ENCODE measurements at regions of chr18 and their contacts with region 1.

Region 1: DNA sequence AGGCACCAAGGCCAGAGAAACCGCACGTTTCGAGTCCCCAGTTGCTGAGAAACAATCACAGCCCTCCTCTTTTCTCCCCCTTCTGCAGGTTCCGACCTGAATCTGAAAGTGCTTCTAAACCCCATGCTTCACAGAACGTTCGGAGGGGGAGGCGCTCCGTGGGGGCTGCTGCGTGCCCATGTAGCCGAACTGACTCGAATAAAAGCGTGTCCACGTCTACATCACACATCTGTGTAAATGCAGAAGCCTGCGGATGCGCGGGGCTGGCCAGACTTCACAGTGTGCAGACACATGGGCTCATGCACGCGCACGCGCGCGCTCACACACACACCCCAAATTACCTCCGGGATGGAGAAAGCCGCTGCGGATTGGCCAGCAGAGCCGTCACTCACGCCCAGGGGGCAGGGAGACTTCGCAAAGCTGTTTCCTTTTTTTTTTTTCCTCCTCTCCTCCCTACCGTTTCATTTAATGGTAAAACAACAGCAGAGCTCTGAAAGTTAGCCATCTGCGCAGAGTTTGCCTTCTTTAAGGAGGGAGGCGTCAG is 2.3 kb downstream of the ZNF516 start:
- DNase-seq: peak; percentile 100
- H3K4me3 ChIP-seq: peak overlapping the region; percentile 49 to 74 (median 66)
- H3K27ac ChIP-seq: peak overlapping the region; percentile 89 to 95 (median 94)
- H3K4me1 ChIP-seq: peaks cover 0 to 48% (median 31%) of the 10 kb centered on the region in 4 donors
- H3K27me3 ChIP-seq: no peaks in the 10 kb centered on the region
- CTCF ChIP-seq: no peak
- EP300 ChIP-seq: no peak
- POLR2A ChIP-seq: peak; percentile 25 to 38

Region 2: DNA sequence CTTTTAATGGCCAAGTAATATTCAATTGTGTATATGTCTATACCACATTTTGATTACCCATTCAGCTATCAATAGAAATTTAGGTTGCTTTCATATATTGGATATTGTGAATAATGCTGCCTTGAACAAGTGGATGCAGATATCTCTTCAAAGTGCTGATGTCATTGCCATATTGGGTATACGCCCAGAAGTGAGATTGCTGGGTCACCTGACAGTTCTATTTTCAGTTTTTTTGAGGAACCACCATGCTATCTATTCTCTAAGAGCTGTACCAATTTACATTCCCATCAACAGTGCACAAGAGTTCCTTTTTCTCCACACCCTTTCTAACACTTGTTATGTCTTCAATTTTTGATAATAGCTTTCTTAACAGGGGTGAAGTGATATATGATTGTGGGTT is 304.6 kb before region 1 on chr18:
- intact Hi-C with region 1: no loop called
- DNase-seq: no peak
- H3K4me3 ChIP-seq: no peak overlapping the region
- H3K27ac ChIP-seq: no peak overlapping the region
- H3K4me1 ChIP-seq: no peaks in the 10 kb centered on the region
- H3K27me3 ChIP-seq: no peaks in the 10 kb centered on the region
- CTCF ChIP-seq: no peak
- EP300 ChIP-seq: no peak
- POLR2A ChIP-seq: no peak

Region 3: GRCh38 chr18:76339246-76339620 is 153.5 kb before region 1 on chr18:
- intact Hi-C with region 1: no loop called
- DNase-seq: no peak
- H3K4me3 ChIP-seq: no peak overlapping the region
- H3K27ac ChIP-seq: no peak overlapping the region
- H3K4me1 ChIP-seq: no peaks in the 10 kb centered on the region
- H3K27me3 ChIP-seq: no peaks in the 10 kb centered on the region
- CTCF ChIP-seq: no peak
- EP300 ChIP-seq: no peak
- POLR2A ChIP-seq: no peak

Region 4: DNA sequence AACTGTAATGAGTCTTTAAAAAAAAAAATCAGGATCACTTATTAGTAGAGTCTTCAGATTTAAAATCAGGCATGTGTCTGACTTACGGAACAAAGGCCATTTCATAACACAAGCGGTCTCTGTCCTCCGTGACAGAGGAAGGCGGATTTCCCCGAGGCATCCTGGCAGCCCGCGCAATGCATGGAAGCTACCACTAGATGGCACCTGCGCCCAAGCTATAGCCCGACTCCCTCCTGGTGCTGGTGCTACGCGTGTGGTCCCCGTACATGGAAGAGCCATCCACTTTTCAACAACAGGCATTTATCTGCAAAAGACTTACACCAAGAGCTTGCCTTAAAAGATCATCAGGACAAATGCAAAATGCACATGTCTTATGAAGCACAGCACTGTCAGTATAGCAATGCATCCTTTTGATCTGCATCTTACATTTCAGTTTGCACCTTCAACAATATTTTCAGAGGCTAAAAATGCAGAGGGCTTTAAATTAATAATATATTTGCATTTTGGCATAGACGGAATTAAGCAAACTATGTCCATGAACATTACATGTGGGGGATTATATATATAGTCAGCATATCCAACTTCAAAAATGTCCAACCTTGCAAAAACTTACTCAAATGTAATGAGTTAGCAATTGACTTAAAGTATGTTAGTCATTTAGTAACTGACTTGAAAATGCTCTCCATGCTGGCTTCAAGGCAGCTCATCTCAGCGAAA is 93.7 kb before region 1 on chr18:
- intact Hi-C with region 1: loop called (anchors 5 kb)
- DNase-seq: peak; percentile 94
- H3K4me3 ChIP-seq: no peak overlapping the region
- H3K27ac ChIP-seq: no peak overlapping the region
- H3K4me1 ChIP-seq: peaks cover 0 to 22% (median 4%) of the 10 kb centered on the region in 4 donors
- H3K27me3 ChIP-seq: no peaks in the 10 kb centered on the region
- CTCF ChIP-seq: peak; percentile 83 to 97 (median 94)
- EP300 ChIP-seq: no peak
- POLR2A ChIP-seq: no peak

Region 5: DNA sequence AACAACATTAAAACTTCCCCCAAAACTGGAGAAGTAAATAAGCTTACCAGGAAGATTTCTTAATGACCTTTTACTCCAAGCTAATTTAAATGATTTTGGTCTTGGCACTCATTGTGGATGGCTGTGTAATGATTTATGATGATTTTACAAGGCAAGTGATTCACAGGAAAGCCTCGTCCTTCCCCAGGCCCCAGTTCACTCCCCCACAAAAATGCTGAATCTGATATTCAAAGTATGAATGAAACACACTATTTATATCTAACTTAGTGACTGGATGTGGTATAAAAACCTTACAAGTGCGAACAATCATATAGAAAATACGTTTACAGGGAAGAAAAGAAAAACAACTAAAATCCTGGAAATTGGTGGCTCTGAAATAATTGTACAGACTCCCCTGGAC is 47.5 kb before region 1 on chr18:
- intact Hi-C with region 1: loop called (anchors 2 kb)
- DNase-seq: no peak
- H3K4me3 ChIP-seq: no peak overlapping the region
- H3K27ac ChIP-seq: peak overlapping the region; percentile 45 to 89 (median 70)
- H3K4me1 ChIP-seq: peaks cover 0 to 75% (median 60%) of the 10 kb centered on the region in 4 donors
- H3K27me3 ChIP-seq: no peaks in the 10 kb centered on the region
- CTCF ChIP-seq: no peak
- EP300 ChIP-seq: no peak
- POLR2A ChIP-seq: no peak

Region 6: GRCh38 chr18:76451396-76452331 is 41.1 kb before region 1 on chr18:
- intact Hi-C with region 1: loop called (anchors 2 kb)
- DNase-seq: peak; percentile 63
- H3K4me3 ChIP-seq: peak overlapping the region; percentile 40 to 64 (median 59)
- H3K27ac ChIP-seq: peak overlapping the region; percentile 79 to 89 (median 86)
- H3K4me1 ChIP-seq: peaks cover 0 to 92% (median 68%) of the 10 kb centered on the region in 4 donors
- H3K27me3 ChIP-seq: no peaks in the 10 kb centered on the region
- CTCF ChIP-seq: peak in 1 of 4 experiments; percentile 11
- EP300 ChIP-seq: no peak
- POLR2A ChIP-seq: no peak

Region 7: GRCh38 chr18:76620321-76621170 is 127.8 kb after region 1 on chr18:
- intact Hi-C with region 1: loop called (anchors 5 kb)
- DNase-seq: peak; percentile 88
- H3K4me3 ChIP-seq: peak overlapping the region; percentile 17 to 50 (median 41)
- H3K27ac ChIP-seq: peak overlapping the region; percentile 57 to 77 (median 72)
- H3K4me1 ChIP-seq: peaks cover 0 to 30% (median 29%) of the 10 kb centered on the region in 4 donors
- H3K27me3 ChIP-seq: no peaks in the 10 kb centered on the region
- CTCF ChIP-seq: peak in 3 of 4 experiments; percentile 28 to 65 (median 44)
- EP300 ChIP-seq: no peak
- POLR2A ChIP-seq: no peak

Region 8: GRCh38 chr18:76686737-76687262 is 194.1 kb after region 1 on chr18:
- intact Hi-C with region 1: loop called (anchors 5 kb)
- DNase-seq: peak; percentile 84
- H3K4me3 ChIP-seq: no peak overlapping the region
- H3K27ac ChIP-seq: peak overlapping the region in 3 of 4 donors; percentile 43 to 65 (median 53)
- H3K4me1 ChIP-seq: peaks cover 0 to 17% (median 7%) of the 10 kb centered on the region in 4 donors
- H3K27me3 ChIP-seq: no peaks in the 10 kb centered on the region
- CTCF ChIP-seq: peak; percentile 42 to 66 (median 65)
- EP300 ChIP-seq: no peak
- POLR2A ChIP-seq: no peak

Region 9: GRCh38 chr18:76822510-76823160 is 329.9 kb after region 1 on chr18 and contains the start of gene ZNF236:
- intact Hi-C with region 1: loop called (anchors 10 kb)
- DNase-seq: peak; percentile 87
- H3K4me3 ChIP-seq: peak within 1 kb of the TSS; percentile 81 to 96 (median 94)
- H3K27ac ChIP-seq: peak within 1 kb of the TSS; percentile 96 to 100 (median 98)
- H3K4me1 ChIP-seq: peaks cover 0 to 45% (median 26%) of the 10 kb centered on the region in 4 donors
- H3K27me3 ChIP-seq: no peaks in the 10 kb centered on the region
- CTCF ChIP-seq: no peak
- EP300 ChIP-seq: no peak
- POLR2A ChIP-seq: no peak
- total RNA-seq, gene ZNF236: 18.9 to 26.6 (median 22.4) TPM

Measured in sigmoid colon (tissue), 7 donors.